ENCODE measurements at regions of chrX and their contacts with region 1.

Region 1: DNA sequence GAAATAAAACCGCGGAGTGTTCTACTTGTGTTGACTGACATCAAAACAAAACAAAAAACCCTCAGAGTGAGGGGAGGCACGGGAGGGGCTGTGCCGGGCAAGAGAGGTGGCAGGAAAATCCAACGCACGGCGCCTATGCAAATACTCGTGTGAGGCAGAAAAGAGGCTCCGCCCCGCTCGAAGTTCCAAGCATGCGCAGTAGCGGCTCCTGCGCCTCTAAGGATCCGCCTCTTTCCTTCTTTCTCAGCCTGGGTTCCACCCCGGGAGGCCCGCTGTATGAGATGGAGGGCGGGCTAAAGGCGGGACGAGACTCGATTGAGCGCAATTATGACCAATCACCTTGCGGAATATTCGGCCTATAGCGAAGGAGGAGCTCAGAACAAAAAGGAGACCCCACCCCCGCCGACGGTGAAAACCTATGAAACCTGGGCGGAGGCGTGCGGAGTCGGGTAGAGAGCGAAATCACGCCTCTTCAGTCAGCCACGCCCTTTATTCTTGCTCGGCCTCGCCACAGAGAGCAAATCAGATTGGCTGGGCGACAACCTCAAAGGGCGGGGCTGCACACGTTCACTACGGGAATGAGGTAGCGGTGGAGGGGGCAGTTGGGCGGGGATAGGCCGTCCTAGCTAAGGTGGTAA is 720 bp upstream of the CDK16 start:
- DNase-seq: peak; percentile 99
- H3K4me3 ChIP-seq: peak overlapping the region in 2 of 3 experiments; percentile 73 to 80
- H3K27ac ChIP-seq: peak overlapping the region; percentile 91
- H3K4me1 ChIP-seq: peaks cover 13% of the 10 kb centered on the region
- H3K27me3 ChIP-seq: no peaks in the 10 kb centered on the region
- CTCF ChIP-seq: no peak
- POLR2A ChIP-seq: no peak

Region 2: DNA sequence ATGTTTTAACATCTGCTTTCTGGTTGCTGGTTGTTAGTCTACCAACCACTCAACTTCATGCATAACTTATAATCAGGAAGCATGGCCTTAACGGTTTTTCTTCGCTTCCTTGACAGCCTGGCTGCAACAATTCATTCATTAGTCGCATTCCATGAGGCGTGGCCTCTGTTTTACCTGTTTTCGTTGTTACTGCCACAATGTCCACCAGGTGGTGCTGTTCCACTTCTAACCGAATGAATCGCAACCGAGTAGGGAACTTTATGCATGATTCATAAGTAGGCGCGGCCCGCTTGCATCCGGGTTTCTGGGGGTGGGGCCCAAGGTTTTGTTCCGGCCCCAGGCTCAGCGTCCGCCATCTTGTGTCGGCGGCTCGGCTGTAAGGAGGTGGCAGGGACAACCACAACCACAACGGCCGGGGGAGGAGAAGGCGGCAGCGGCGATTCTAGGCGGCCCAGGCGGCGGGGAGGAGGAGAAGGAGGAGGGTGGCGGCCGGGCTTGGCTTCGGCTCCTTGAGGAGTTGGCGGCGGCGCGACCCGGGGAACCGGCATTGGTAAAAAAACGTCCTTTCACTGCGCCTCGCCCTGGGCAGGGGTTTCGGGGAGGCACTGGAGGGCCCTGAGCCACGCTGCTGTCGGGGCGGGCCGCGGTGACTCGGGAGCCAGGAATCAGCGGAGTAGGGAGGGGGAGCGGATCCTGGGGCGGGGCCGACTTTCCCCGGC is 24.1 kb before region 1 on chrX and contains the start of gene UBA1:
- CTCF ChIA-PET with region 1: no interaction called
- POLR2A ChIA-PET with region 1: interaction called, 3 read pairs
- dilution Hi-C with region 1: no loop called
- intact Hi-C with region 1: loop called (anchors 1 kb)
- DNase-seq: peak; percentile 95
- H3K4me3 ChIP-seq: peak within 1 kb of the TSS; percentile 77 to 88 (median 88)
- H3K27ac ChIP-seq: peak within 1 kb of the TSS; percentile 76
- H3K4me1 ChIP-seq: peaks cover 39% of the 10 kb centered on the region
- H3K27me3 ChIP-seq: no peaks in the 10 kb centered on the region
- CTCF ChIP-seq: peak; percentile 49 to 58
- POLR2A ChIP-seq: peak; percentile 74
- total RNA-seq, gene UBA1: 236 and 237 TPM in 2 replicates

Region 3: DNA sequence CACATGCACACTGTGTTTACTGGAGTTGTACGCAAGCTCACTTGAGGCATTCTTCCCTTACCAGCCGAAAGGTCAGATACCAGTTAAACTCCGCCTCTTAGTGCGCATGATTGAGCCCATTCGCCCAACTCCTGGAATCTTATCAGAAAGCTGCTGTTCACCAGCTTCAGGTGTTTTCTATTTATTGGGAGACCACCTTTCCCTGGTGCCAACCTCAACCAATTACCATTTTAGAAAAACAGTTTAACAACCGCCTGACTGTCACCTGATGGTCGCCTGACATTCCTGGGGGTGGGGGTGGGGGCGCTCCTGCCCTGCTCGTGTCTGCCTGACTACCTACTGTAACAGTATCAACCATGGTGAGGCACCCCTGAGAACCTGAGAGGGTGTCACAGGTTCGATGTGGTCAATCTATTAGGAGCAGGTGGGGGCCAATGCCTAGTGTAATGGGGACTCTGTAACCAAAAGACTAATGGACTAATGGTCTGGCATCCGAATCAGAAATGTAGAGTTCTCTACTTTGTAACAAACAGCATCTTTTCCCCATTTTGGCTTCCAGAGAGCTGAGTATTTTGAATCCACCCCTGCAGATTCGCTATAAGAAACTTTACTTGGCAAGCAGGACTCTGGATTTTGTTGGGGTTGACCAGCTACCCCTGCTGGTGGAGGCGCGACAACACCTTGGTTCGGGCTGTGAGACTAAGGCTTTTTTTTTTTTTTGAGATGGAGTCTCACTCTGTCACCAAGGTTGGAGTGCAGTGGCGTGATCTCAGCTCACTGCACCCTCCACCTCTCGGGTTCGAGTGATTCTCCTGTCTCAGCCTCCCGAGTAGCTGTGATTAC is 94.4 kb after region 1 on chrX:
- CTCF ChIA-PET with region 1: interaction called, 4 read pairs
- POLR2A ChIA-PET with region 1: no interaction called
- dilution Hi-C with region 1: no loop called
- intact Hi-C with region 1: loop called (anchors 1 kb)
- DNase-seq: peak; percentile 31
- H3K4me3 ChIP-seq: no peak overlapping the region
- H3K27ac ChIP-seq: no peak overlapping the region
- H3K4me1 ChIP-seq: no peaks in the 10 kb centered on the region
- H3K27me3 ChIP-seq: peaks cover 0 to 2% of the 10 kb centered on the region in 2 experiments
- CTCF ChIP-seq: peak; percentile 14 to 48
- POLR2A ChIP-seq: no peak

Region 4: GRCh38 chrX:47384502-47384901 is 166.7 kb after region 1 on chrX:
- CTCF ChIA-PET with region 1: interaction called, 7 read pairs
- POLR2A ChIA-PET with region 1: interaction called, 5 read pairs
- dilution Hi-C with region 1: no loop called
- intact Hi-C with region 1: loop called (anchors 2 kb)
- DNase-seq: peak; percentile 57
- H3K4me3 ChIP-seq: no peak overlapping the region
- H3K27ac ChIP-seq: no peak overlapping the region
- H3K4me1 ChIP-seq: no peaks in the 10 kb centered on the region
- H3K27me3 ChIP-seq: no peaks in the 10 kb centered on the region
- CTCF ChIP-seq: peak; percentile 46 to 51
- POLR2A ChIP-seq: no peak

Region 5: DNA sequence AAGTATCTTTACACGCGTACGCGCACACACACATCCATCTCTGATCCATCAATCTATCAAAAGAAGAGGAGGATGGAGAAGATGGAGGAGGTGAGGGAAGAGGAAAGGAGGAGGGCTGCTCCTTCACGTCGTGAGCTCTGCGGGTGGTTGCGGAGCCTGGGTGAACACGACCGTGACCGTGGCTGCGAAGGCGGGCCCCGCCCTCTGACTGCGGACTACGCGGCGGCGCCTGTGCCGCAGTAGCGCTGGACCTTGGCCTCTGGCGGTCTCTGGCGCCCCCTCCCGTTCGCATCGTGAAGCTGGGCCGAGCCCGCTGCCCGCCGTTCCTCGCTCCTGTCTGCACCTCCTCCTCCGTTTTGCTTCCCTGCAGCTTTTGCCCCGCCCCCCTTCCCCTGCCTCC is 305.5 kb after region 1 on chrX:
- CTCF ChIA-PET with region 1: interaction called, 13 read pairs
- POLR2A ChIA-PET with region 1: interaction called, 3 read pairs
- dilution Hi-C with region 1: no loop called
- intact Hi-C with region 1: loop called (anchors 5 kb)
- DNase-seq: peak; percentile 72
- H3K4me3 ChIP-seq: peak overlapping the region in 2 of 3 experiments; percentile 56 to 66
- H3K27ac ChIP-seq: no peak overlapping the region
- H3K4me1 ChIP-seq: peaks cover under 1% of the 10 kb centered on the region
- H3K27me3 ChIP-seq: no peaks in the 10 kb centered on the region
- CTCF ChIP-seq: peak; percentile 60 to 87
- POLR2A ChIP-seq: no peak